Aorta (tissue), 5 donors: ENCODE measurements at regions of chr1 and their contacts with region 1.

Region 1: GRCh38 chr1:218339267-218339831 is 5.8 kb upstream of the TGFB2 start:
- DNase-seq: no peak
- ATAC-seq: no peak
- H3K4me3 ChIP-seq: no peak overlapping the region
- H3K27ac ChIP-seq: no peak overlapping the region
- H3K4me1 ChIP-seq: no peaks in the 10 kb centered on the region
- H3K27me3 ChIP-seq: no peaks in the 10 kb centered on the region

Region 2: DNA sequence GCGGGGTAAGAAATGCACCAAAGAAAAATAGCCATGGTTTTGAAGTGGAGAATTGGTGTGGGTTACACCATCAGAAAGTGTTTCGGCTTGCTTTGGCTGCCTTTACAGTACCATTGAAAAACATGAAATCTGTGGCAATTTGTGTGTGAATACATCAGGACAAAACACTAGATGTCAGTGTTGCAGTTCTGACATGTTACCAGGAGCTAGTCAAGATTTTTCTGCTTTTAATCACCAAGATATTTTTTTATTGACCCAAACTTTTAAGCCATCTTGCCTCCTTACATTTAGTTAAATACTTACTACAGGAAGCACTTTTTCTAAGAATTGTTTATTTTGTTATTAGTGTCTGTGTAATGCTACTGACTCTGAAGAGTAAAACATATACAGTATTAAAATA is 39.9 kb before region 1 on chr1:
- intact Hi-C with region 1: no loop called
- DNase-seq: no peak
- ATAC-seq: no peak
- H3K4me3 ChIP-seq: no peak overlapping the region
- H3K27ac ChIP-seq: no peak overlapping the region
- H3K4me1 ChIP-seq: no peaks in the 10 kb centered on the region
- H3K27me3 ChIP-seq: no peaks in the 10 kb centered on the region

Region 3: DNA sequence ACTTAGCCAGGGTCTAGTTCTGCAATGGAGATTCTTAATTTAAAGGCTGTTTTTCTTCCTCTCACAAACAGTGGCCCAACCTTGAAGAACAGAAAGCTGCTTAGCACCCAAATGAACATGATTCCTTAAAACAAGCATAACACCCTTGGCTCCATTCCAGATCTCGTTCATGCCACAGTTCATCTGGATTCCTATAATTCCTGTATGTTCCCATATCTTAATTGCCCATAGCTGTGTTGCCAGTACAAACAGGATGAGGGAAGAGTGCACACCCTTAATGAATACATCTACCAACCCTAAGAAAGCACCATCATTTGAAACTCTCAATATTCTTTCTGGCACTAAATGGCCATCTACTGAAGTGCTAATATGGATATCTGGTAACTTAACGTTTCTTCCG is 51.3 kb after region 1 on chr1:
- intact Hi-C with region 1: no loop called
- DNase-seq: no peak
- ATAC-seq: no peak
- H3K4me3 ChIP-seq: no peak overlapping the region
- H3K27ac ChIP-seq: no peak overlapping the region
- H3K4me1 ChIP-seq: peaks cover 3% of the 10 kb centered on the region in 2 donors
- H3K27me3 ChIP-seq: no peaks in the 10 kb centered on the region

Region 4: DNA sequence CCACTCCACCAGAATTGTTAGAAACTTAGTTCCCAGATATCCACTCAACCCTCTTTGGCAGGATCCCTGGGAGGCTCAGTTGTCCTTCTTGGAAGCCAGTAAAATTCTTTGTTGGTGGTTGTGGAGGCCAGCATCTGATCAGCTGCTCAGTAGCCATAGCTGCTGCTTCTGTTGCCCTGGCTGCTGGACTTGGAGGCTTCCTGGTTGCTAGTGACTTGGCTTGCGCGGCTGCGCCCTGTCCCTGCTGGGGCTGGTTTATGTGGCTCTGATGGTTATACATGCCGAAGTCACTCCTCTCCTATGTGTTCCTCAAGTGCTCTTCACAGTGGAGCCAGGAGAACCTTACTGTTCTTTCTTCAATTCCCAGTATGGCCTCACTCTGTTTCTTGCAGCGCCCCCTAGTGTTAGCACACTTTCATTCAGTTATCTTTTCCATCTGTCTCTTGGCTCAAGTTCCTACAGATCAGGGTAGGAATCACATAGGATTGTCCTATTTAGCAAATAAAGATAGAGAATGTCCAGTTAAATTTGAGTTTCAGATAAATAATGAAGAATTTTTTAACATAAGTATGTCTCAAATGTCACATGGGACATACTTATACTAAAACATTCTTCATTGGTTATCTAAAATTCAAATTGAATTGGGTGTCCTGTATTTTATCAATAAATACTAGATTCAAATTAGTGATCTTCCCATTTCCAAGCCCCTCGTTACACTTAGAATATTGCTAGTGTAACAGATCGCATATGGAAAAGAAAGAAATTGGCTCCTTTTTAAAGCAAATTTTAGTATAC is 182.2 kb after region 1 on chr1:
- intact Hi-C with region 1: loop called (anchors 2 to 5 kb)
- DNase-seq: peak in 1 of 2 donors; percentile 63
- ATAC-seq: peak; percentile 71
- H3K4me3 ChIP-seq: no peak overlapping the region
- H3K27ac ChIP-seq: no peak overlapping the region
- H3K4me1 ChIP-seq: no peaks in the 10 kb centered on the region
- H3K27me3 ChIP-seq: no peaks in the 10 kb centered on the region

Region 5: GRCh38 chr1:218735436-218736032 is 396.2 kb after region 1 on chr1:
- intact Hi-C with region 1: loop called in 1 of 2 experiments (anchors 5 kb)
- DNase-seq: no peak
- ATAC-seq: peak; percentile 83
- H3K4me3 ChIP-seq: no peak overlapping the region
- H3K27ac ChIP-seq: no peak overlapping the region
- H3K4me1 ChIP-seq: no peaks in the 10 kb centered on the region
- H3K27me3 ChIP-seq: no peaks in the 10 kb centered on the region

Region 6: GRCh38 chr1:219416594-219417238 is 1077.4 kb after region 1 on chr1:
- intact Hi-C with region 1: loop called in 1 of 2 experiments (anchors 5 kb)
- DNase-seq: peak in 1 of 2 donors; percentile 60
- ATAC-seq: peak; percentile 73
- H3K4me3 ChIP-seq: no peak overlapping the region
- H3K27ac ChIP-seq: no peak overlapping the region
- H3K4me1 ChIP-seq: no peaks in the 10 kb centered on the region
- H3K27me3 ChIP-seq: no peaks in the 10 kb centered on the region

Region 7: DNA sequence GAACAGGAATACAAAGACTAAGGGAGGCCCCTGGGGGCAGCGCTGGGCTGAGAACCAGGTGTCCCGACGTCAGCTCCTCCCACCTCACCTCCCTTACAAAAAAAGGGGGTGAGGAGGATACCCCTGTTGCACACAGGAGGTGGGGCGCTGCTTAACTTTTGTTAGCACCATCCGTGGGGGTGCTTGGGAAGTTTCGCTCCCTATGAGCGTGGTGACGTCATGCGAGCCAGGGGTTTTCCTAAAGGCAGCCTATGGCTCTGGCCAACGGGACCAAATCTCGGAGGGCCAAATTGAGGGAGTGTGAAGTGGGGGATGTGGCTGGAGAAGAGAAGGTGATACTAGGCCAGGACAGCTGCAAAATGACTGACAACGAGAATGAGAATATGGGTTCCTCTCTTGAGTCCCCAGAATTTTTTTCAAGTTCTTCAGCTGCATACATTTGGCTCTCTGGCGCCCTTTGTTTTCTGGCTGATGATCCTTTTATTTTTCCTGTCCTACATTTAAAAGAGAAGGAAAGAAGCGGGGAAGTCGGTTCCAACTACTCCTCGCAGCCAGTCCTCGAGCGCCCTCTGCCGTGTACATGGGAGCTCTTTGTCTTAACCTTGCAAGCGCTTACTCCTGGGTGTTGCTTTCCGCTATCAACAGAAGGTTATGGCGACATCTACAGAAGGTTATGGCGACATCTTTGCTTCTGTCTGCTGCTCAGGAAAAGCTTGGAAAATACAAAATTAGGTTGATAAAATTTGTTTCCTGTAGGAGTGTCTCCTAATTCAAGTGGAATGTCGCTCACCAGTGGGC is 1321.5 kb after region 1 on chr1:
- intact Hi-C with region 1: loop called in 1 of 2 experiments (anchors 5 kb)
- DNase-seq: peak; percentile 92 to 96
- ATAC-seq: peak; percentile 86
- H3K4me3 ChIP-seq: no peak overlapping the region
- H3K27ac ChIP-seq: no peak overlapping the region
- H3K4me1 ChIP-seq: no peaks in the 10 kb centered on the region
- H3K27me3 ChIP-seq: no peaks in the 10 kb centered on the region